Naive thymus-derived CD8-positive, alpha-beta T cell (primary cell): ENCODE measurements at regions of chr3 and their contacts with region 1.

Region 1: DNA sequence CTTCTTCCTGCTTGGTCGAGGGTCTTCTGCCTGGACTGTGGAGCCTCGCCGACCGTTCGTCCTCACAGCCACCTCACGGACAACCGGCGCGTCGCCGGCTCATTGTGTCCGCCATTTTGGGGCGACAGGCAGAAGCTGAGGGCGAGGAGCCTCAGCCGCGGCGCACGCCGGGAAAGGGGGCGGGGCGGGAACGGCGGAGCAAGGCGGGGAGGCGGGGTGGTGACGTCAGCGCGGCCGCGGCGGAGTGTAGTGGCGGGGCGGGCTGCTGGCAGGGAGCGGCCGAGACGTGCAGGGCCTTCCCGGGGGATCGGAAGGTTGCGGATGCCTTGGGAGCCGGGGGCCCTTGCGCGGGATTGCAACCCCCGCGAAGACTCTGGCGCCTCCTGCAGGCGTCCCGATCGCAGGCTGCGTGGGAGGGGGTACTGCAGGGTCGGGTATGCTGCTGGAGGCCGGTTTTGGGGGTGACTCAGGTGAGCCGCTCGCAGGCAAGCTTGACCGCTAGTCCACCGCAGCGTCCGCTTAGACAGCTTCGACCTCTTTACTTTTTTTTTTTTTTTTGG is at the start of gene WDR82:
- DNase-seq: peak; percentile 93 to 99 (median 96)
- ATAC-seq: peak; percentile 71 to 80
- H3K4me3 Mint-ChIP-seq: peak within 1 kb of the TSS; percentile 94 to 100 (median 97)
- H3K27ac Mint-ChIP-seq: peak within 1 kb of the TSS; percentile 93 to 99 (median 98)
- H3K4me1 Mint-ChIP-seq: peaks cover 32 to 83% (median 66%) of the 10 kb centered on the region in 4 donors
- H3K27me3 Mint-ChIP-seq: no peaks in the 10 kb centered on the region
- polyA plus RNA-seq, gene WDR82: 136 to 172 (median 146) TPM

Region 2: GRCh38 chr3:52208556-52208955 is 70.0 kb before region 1 on chr3:
- POLR2A ChIA-PET with region 1: no interaction called
- DNase-seq: no peak
- ATAC-seq: no peak
- H3K4me3 Mint-ChIP-seq: no peak overlapping the region
- H3K27ac Mint-ChIP-seq: peak overlapping the region in 1 of 10 donors; percentile 75
- H3K4me1 Mint-ChIP-seq: peaks cover 0 to 8% (median 2%) of the 10 kb centered on the region in 4 donors
- H3K27me3 Mint-ChIP-seq: no peaks in the 10 kb centered on the region

Region 3: GRCh38 chr3:52238761-52239701 is 39.6 kb before region 1 on chr3 and contains the start of gene TWF2:
- POLR2A ChIA-PET with region 1: interaction called, 1,841 read pairs
- DNase-seq: peak; percentile 81 to 95 (median 92)
- ATAC-seq: peak; percentile 79 to 83
- H3K4me3 Mint-ChIP-seq: peak within 1 kb of the TSS; percentile 88 to 99 (median 96)
- H3K27ac Mint-ChIP-seq: peak within 1 kb of the TSS; percentile 93 to 98 (median 95)
- H3K4me1 Mint-ChIP-seq: peaks cover 33 to 89% (median 84%) of the 10 kb centered on the region in 4 donors
- H3K27me3 Mint-ChIP-seq: no peaks in the 10 kb centered on the region
- polyA plus RNA-seq, gene TWF2: 112 to 171 (median 142) TPM

Region 4: GRCh38 chr3:52291508-52292181 is 13.1 kb after region 1 on chr3:
- POLR2A ChIA-PET with region 1: interaction called, 129 read pairs
- DNase-seq: peak in 9 of 10 donors; percentile 33 to 79 (median 50)
- ATAC-seq: peak; percentile 24 to 37
- H3K4me3 Mint-ChIP-seq: peak overlapping the region in 7 of 10 donors; percentile 21 to 76 (median 39)
- H3K27ac Mint-ChIP-seq: peak overlapping the region in 8 of 10 donors; percentile 15 to 87 (median 68)
- H3K4me1 Mint-ChIP-seq: peaks cover 25 to 51% (median 38%) of the 10 kb centered on the region in 4 donors
- H3K27me3 Mint-ChIP-seq: no peaks in the 10 kb centered on the region

Region 5: GRCh38 chr3:52339612-52340011 is 61.0 kb after region 1 on chr3:
- POLR2A ChIA-PET with region 1: interaction called, 12 read pairs
- DNase-seq: peak in 9 of 10 donors; percentile 33 to 84 (median 61)
- ATAC-seq: peak; percentile 71 to 75
- H3K4me3 Mint-ChIP-seq: no peak overlapping the region
- H3K27ac Mint-ChIP-seq: peak overlapping the region in 7 of 10 donors; percentile 23 to 70 (median 56)
- H3K4me1 Mint-ChIP-seq: peaks cover 4 to 24% (median 14%) of the 10 kb centered on the region in 4 donors
- H3K27me3 Mint-ChIP-seq: no peaks in the 10 kb centered on the region

Region 6: DNA sequence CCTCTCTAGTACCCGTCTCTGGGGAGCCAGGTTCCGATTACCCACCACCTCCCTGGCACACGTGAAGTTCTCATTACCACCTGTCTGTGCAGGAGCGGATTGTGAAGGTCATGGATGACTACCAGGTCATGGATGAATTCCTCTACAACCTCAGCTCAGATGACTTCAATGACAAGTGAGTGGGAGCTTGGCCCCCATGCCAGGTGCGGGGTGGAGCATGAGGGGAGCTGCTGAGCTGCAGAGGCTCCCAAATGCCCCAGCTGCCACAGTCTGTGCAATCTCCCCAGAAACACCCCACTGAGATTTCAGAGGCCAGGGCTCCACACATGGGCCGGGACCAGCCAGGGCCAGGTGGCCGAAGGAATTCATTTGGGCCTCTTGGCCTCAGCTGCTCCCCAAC is 71.8 kb after region 1 on chr3:
- POLR2A ChIA-PET with region 1: no interaction called
- DNase-seq: peak in 1 of 10 donors; percentile 1
- ATAC-seq: no peak
- H3K4me3 Mint-ChIP-seq: no peak overlapping the region
- H3K27ac Mint-ChIP-seq: no peak overlapping the region
- H3K4me1 Mint-ChIP-seq: peaks cover 0 to 7% (median 0%) of the 10 kb centered on the region in 4 donors
- H3K27me3 Mint-ChIP-seq: no peaks in the 10 kb centered on the region